ENCODE measurements at regions of chr6 and their contacts with region 1.

Region 1: GRCh38 chr6:134299236-134299635 is 18.7 kb downstream of the SGK1 start:
- DNase-seq: no peak
- H3K4me3 ChIP-seq: no peak overlapping the region
- H3K27ac ChIP-seq: no peak overlapping the region
- H3K4me1 ChIP-seq: no peaks in the 10 kb centered on the region
- H3K27me3 ChIP-seq: no peaks in the 10 kb centered on the region
- CTCF ChIP-seq: no peak

Region 2: DNA sequence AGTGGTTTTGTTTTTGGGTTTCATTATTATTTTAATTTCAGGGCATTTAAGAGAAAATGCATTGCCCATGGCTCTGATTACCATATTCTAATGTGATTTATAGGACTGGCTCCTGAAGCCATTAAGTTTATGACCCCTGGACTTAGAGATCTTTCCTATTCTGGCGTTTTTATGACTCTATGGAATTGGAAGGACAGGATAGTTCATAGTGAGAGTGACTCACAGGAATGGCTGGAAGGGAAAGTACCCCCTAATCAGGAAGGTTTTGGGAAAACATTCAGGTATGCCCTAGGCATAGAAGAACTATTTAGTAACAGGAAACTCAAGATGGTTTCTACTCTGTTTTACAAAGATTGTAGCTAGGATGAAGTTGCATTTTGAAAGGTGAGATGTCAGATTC is 138.2 kb before region 1 on chr6:
- CTCF ChIA-PET with region 1: no interaction called
- POLR2A ChIA-PET with region 1: no interaction called
- intact Hi-C with region 1: no loop called
- DNase-seq: no peak
- H3K4me3 ChIP-seq: no peak overlapping the region
- H3K27ac ChIP-seq: no peak overlapping the region
- H3K4me1 ChIP-seq: no peaks in the 10 kb centered on the region
- H3K27me3 ChIP-seq: no peaks in the 10 kb centered on the region
- CTCF ChIP-seq: no peak

Region 3: GRCh38 chr6:134317471-134318131 is 18.4 kb after region 1 on chr6 and contains the start of gene SGK1:
- CTCF ChIA-PET with region 1: no interaction called
- POLR2A ChIA-PET with region 1: interaction called, 14 read pairs
- intact Hi-C with region 1: no loop called
- DNase-seq: peak; percentile 35
- H3K4me3 ChIP-seq: peak within 1 kb of the TSS; percentile 55
- H3K27ac ChIP-seq: no peak within 1 kb of the TSS
- H3K4me1 ChIP-seq: peaks cover 6% of the 10 kb centered on the region
- H3K27me3 ChIP-seq: peaks cover 3% of the 10 kb centered on the region
- CTCF ChIP-seq: no peak
- total RNA-seq, gene SGK1: 40.0 and 73.3 TPM in 2 replicates

Region 4: DNA sequence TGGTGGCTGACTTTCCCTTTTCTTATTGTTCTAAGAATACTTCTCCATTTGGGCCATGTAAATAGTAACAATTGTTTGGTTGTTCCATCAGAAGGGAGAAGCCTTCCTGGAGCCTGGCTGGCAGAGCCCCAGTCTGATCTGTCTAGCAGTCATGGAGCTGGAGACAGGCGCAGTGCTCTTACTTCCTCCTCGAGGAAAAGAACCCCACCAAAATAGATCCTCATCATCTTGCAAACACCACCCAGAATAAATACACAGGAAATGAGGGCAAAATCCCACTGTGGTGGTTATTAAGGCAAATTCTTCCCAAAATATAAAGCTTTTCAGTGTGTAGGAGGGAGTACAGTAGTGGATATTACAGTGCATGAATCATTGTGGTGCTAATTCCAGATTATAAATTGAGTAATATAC is 213.8 kb after region 1 on chr6:
- CTCF ChIA-PET with region 1: no interaction called
- POLR2A ChIA-PET with region 1: no interaction called
- intact Hi-C with region 1: no loop called
- DNase-seq: peak; percentile 81
- H3K4me3 ChIP-seq: no peak overlapping the region
- H3K27ac ChIP-seq: peak overlapping the region; percentile 64
- H3K4me1 ChIP-seq: peaks cover 61% of the 10 kb centered on the region
- H3K27me3 ChIP-seq: no peaks in the 10 kb centered on the region
- CTCF ChIP-seq: no peak